H1 (cell line): ENCODE measurements at regions of chr5 and their contacts with region 1.

Region 1: DNA sequence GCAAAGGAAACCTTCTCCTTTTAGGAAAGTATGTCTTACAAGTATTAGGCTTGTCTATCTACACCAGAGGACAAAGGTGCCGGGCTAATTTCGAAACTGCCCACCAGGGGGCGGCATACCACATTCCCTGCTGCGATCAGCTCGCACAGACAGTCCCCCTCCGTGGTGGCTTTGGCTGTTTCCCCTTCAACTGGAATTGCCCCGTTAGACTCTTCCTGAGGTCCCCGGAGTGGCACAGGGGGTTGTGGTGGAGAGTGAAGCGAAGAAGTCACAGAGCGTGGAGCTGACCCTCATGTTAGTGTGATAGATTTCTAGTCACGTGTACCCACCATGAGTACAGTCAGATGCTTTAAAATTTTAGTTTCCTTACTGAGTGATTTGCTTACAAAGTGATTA is 17.5 kb downstream of the PTTG1 start:
- DNase-seq: peak; percentile 83 to 99
- H3K4me3 ChIP-seq: peak overlapping the region in 3 of 4 experiments; percentile 8 to 54 (median 36); a peak in 5 of 8 replicates
- H3K27ac ChIP-seq: no peak overlapping the region
- H3K4me1 ChIP-seq: no peaks in the 10 kb centered on the region
- H3K27me3 ChIP-seq: no peaks in the 10 kb centered on the region
- CTCF ChIP-seq: peak; percentile 82 to 91 (median 88)
- EP300 ChIP-seq: no peak
- POLR2A ChIP-seq: no peak
- RAD21 ChIP-seq: peak; percentile 71 to 78

Region 2: GRCh38 chr5:160071516-160071915 is 367.7 kb before region 1 on chr5:
- CTCF ChIA-PET with region 1: no interaction called
- POLR2A ChIA-PET with region 1: no interaction called
- DNase-seq: no peak
- H3K4me3 ChIP-seq: no peak overlapping the region
- H3K27ac ChIP-seq: no peak overlapping the region
- H3K4me1 ChIP-seq: peaks cover 0 to 4% (median 0%) of the 10 kb centered on the region in 4 experiments; a peak in 3 of 7 replicates
- H3K27me3 ChIP-seq: no peaks in the 10 kb centered on the region
- CTCF ChIP-seq: no peak
- EP300 ChIP-seq: no peak
- POLR2A ChIP-seq: no peak
- RAD21 ChIP-seq: no peak

Region 3: DNA sequence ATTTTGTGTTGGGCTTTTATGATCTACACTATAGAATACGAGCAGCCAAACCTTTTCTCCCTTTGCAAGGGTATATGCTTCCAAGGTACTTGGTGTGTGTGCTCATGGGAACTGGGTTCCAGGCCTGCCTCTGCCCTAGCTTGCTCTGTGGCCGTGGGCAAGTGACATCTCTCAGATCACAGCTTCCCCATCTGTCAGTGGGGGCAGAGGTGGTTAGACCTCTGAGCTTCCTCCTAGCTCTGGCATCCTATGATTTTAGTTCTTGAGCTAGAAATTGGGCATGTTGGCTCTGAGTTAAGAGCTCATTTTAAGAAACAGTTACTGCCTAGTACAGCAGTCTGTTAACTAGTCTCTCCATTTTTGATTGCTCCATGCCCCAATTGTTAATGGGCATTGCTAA is 114.3 kb before region 1 on chr5:
- CTCF ChIA-PET with region 1: no interaction called
- POLR2A ChIA-PET with region 1: no interaction called
- DNase-seq: no peak
- H3K4me3 ChIP-seq: no peak overlapping the region
- H3K27ac ChIP-seq: no peak overlapping the region
- H3K4me1 ChIP-seq: peaks cover 0 to 3% (median 0%) of the 10 kb centered on the region in 4 experiments; a peak in 1 of 7 replicates
- H3K27me3 ChIP-seq: no peaks in the 10 kb centered on the region
- CTCF ChIP-seq: no peak
- EP300 ChIP-seq: no peak
- POLR2A ChIP-seq: no peak
- RAD21 ChIP-seq: no peak

Region 4: GRCh38 chr5:160353379-160353778 is 85.8 kb before region 1 on chr5:
- CTCF ChIA-PET with region 1: no interaction called
- POLR2A ChIA-PET with region 1: no interaction called
- DNase-seq: no peak
- H3K4me3 ChIP-seq: no peak overlapping the region
- H3K27ac ChIP-seq: no peak overlapping the region
- H3K4me1 ChIP-seq: no peaks in the 10 kb centered on the region; a peak in 2 of 7 replicates
- H3K27me3 ChIP-seq: no peaks in the 10 kb centered on the region; a peak in 1 of 7 replicates
- CTCF ChIP-seq: no peak
- EP300 ChIP-seq: no peak
- POLR2A ChIP-seq: no peak
- RAD21 ChIP-seq: no peak

Region 5: GRCh38 chr5:160366230-160366629 is 73.0 kb before region 1 on chr5:
- CTCF ChIA-PET with region 1: no interaction called
- POLR2A ChIA-PET with region 1: no interaction called
- DNase-seq: no peak
- H3K4me3 ChIP-seq: no peak overlapping the region
- H3K27ac ChIP-seq: no peak overlapping the region
- H3K4me1 ChIP-seq: peaks cover 3 to 5% (median 4%) of the 10 kb centered on the region in 4 experiments; a peak in 4 of 7 replicates
- H3K27me3 ChIP-seq: peaks cover 1 to 14% (median 8%) of the 10 kb centered on the region in 4 experiments
- CTCF ChIP-seq: no peak
- EP300 ChIP-seq: no peak
- POLR2A ChIP-seq: no peak
- RAD21 ChIP-seq: no peak

Region 6: GRCh38 chr5:160452795-160453194 is 13.6 kb after region 1 on chr5:
- CTCF ChIA-PET with region 1: interaction called, 47 read pairs
- POLR2A ChIA-PET with region 1: interaction called, 3 read pairs
- DNase-seq: peak in 1 of 2 experiments; percentile 13
- H3K4me3 ChIP-seq: no peak overlapping the region
- H3K27ac ChIP-seq: no peak overlapping the region
- H3K4me1 ChIP-seq: no peaks in the 10 kb centered on the region
- H3K27me3 ChIP-seq: no peaks in the 10 kb centered on the region
- CTCF ChIP-seq: no peak
- EP300 ChIP-seq: no peak
- POLR2A ChIP-seq: no peak
- RAD21 ChIP-seq: no peak

Region 7: GRCh38 chr5:160479926-160480325 is 40.7 kb after region 1 on chr5:
- CTCF ChIA-PET with region 1: interaction called, 29 read pairs
- POLR2A ChIA-PET with region 1: no interaction called
- DNase-seq: no peak
- H3K4me3 ChIP-seq: no peak overlapping the region
- H3K27ac ChIP-seq: no peak overlapping the region
- H3K4me1 ChIP-seq: peaks cover 1 to 12% (median 9%) of the 10 kb centered on the region in 4 experiments; a peak in 6 of 7 replicates
- H3K27me3 ChIP-seq: no peaks in the 10 kb centered on the region
- CTCF ChIP-seq: no peak
- EP300 ChIP-seq: no peak
- POLR2A ChIP-seq: no peak
- RAD21 ChIP-seq: no peak

Region 8: DNA sequence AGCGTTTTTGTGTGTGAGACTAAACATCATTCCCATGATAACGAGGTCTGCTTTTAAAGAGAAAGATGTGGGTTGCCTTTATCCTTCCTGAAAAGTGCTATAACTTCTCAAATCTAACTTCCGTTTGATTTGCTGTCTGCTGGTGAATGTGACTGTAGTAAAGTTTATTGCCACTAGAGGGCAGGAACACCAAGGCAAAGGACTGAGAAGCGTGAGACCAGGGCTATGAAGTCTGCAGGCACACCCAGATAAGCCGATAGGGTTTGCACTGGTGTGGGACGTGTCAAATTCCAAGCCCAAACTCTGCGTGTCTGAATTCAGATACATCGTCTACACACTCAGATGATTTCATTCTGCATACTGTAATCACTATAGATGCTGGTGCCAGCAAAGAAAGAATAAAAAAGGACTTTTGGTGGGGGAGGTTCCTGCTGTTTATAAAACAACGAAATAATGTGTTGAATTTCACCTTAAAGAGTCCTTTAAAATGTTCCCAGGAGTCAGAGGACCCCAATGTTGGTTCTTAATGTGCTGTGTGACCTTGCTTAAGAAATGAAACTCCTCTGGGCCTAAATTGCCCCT is 69.7 kb after region 1 on chr5:
- CTCF ChIA-PET with region 1: interaction called, 81 read pairs
- POLR2A ChIA-PET with region 1: no interaction called
- DNase-seq: peak; percentile 44 to 63
- H3K4me3 ChIP-seq: no peak overlapping the region
- H3K27ac ChIP-seq: no peak overlapping the region
- H3K4me1 ChIP-seq: 0 out of 7 replicates have a peak, but pooled peaks cover 0 to 5% (median 1%) of the 10 kb centered on the region in 4 experiments
- H3K27me3 ChIP-seq: no peaks in the 10 kb centered on the region
- CTCF ChIP-seq: peak; percentile 39 to 90 (median 87)
- EP300 ChIP-seq: no peak
- POLR2A ChIP-seq: no peak
- RAD21 ChIP-seq: peak; percentile 99 to 100

Region 9: GRCh38 chr5:160649304-160649703 is 210.1 kb after region 1 on chr5:
- CTCF ChIA-PET with region 1: interaction called, 11 read pairs
- POLR2A ChIA-PET with region 1: no interaction called
- DNase-seq: no peak
- H3K4me3 ChIP-seq: no peak overlapping the region
- H3K27ac ChIP-seq: no peak overlapping the region
- H3K4me1 ChIP-seq: no peaks in the 10 kb centered on the region
- H3K27me3 ChIP-seq: no peaks in the 10 kb centered on the region
- CTCF ChIP-seq: peak; percentile 51 to 76 (median 58)
- EP300 ChIP-seq: no peak
- POLR2A ChIP-seq: no peak
- RAD21 ChIP-seq: peak; percentile 75 to 79